AG04449 (cell line): ENCODE measurements at regions of chr4 and their contacts with region 1.

Region 1: DNA sequence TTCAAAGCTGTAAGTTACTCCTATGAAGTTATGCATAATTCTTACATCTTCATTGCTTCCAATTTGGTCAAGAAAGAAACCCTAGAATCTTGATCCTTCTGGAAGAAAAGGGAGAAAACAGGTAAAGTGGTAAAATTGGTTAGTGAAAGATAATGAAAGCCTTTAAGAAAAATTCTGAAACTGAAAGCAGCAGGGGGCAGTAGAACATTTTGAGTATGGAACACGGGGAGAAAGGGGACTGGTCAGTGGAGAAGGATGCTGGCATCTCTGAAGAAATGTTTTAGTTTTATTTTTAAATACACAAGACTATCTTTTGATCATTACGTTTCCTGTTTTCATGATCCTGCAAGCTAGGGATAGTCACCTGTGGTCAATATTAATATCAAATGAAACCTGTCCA is 54.3 kb downstream of the SLIT2 start:
- DNase-seq: no peak
- H3K4me3 ChIP-seq: no peak overlapping the region
- CTCF ChIP-seq: peak; percentile 27

Region 2: DNA sequence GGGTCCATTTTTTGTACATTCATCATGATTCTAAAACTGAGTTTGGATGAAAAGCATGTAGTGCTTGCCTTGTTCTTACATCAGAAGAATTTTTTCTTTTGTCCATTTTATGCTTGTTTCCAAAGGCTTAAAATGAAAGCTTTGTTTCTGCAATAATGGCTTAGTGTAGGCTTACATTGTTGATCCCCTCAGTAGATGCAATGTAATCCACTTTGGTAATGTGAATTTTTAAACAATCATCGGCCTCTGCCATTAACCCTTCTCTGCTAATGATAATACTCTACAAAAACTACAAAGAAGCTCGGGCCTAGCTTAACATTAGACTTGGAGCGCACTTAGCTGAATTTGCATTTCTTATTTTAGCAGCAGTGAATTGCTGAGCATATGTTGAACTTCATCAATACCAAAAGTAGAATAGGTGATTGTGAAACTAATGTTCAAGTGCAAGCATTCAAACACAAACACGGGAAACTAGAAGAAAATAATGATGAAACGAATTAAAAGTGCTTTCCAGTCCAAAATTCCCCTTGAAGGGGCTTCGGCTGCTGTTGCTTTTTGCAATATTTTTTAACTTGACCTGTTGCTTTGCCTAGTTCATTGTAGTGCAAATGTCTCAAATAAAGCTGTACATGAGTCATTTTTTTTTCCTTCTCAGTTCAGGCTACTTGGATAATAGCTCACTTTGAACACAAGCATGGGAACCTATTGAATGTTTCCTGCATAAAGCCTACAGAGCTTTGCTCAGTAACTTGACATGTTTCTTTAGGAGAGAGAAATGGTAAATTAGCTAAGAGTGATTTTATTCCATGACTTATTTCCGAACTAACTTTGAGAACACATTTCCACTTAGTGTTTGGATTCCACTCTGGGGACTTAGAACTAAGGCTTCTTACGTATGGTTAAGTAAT is 12.3 kb after region 1 on chr4:
- CTCF ChIA-PET with region 1: interaction called, 29 read pairs
- POLR2A ChIA-PET with region 1: no interaction called
- DNase-seq: no peak
- H3K4me3 ChIP-seq: no peak overlapping the region
- CTCF ChIP-seq: no peak

Region 3: GRCh38 chr4:20422398-20422797 is 116.4 kb after region 1 on chr4:
- CTCF ChIA-PET with region 1: interaction called, 69 read pairs
- POLR2A ChIA-PET with region 1: no interaction called
- DNase-seq: no peak
- H3K4me3 ChIP-seq: no peak overlapping the region
- CTCF ChIP-seq: peak; percentile 54

Region 4: DNA sequence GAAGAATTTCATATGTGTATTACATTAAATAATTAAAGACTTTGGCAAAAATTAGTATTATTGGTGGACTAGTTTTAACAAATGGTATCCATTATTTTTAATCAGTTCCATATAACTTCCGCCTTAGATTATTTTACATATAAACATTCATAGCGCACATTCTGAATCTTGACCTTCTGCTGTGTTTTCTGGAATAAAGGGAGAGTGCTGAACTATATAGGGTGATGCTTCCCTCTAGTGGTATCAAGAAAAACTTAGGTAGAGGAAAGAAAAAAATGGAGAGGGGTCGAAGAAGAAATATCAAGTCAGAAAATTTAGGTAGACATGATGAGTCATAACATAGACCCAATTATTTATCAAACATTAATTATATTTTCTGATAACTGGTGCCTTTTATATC is 238.7 kb after region 1 on chr4:
- CTCF ChIA-PET with region 1: interaction called, 28 read pairs
- POLR2A ChIA-PET with region 1: no interaction called
- DNase-seq: no peak
- H3K4me3 ChIP-seq: no peak overlapping the region
- CTCF ChIP-seq: peak; percentile 37